ENCODE measurements at regions of chr12 and their contacts with region 1.

Region 1: GRCh38 chr12:49740930-49741881 is at the start of gene TMBIM6:
- DNase-seq: peak; percentile 100
- H3K4me3 ChIP-seq: peak within 1 kb of the TSS; percentile 100
- H3K27ac ChIP-seq: peak within 1 kb of the TSS; percentile 97
- H3K27me3 ChIP-seq: no peaks in the 10 kb centered on the region
- CTCF ChIP-seq: peak; percentile 96
- polyA plus RNA-seq, gene TMBIM6: 711 and 906 TPM in 2 replicates

Region 2: GRCh38 chr12:49644620-49644994 is 96.6 kb before region 1 on chr12:
- CTCF ChIA-PET with region 1: interaction called, 17 read pairs
- POLR2A ChIA-PET with region 1: interaction called, 7 read pairs
- DNase-seq: peak; percentile 54
- H3K4me3 ChIP-seq: no peak overlapping the region
- H3K27ac ChIP-seq: no peak overlapping the region
- H3K27me3 ChIP-seq: no peaks in the 10 kb centered on the region
- CTCF ChIP-seq: peak; percentile 99

Region 3: DNA sequence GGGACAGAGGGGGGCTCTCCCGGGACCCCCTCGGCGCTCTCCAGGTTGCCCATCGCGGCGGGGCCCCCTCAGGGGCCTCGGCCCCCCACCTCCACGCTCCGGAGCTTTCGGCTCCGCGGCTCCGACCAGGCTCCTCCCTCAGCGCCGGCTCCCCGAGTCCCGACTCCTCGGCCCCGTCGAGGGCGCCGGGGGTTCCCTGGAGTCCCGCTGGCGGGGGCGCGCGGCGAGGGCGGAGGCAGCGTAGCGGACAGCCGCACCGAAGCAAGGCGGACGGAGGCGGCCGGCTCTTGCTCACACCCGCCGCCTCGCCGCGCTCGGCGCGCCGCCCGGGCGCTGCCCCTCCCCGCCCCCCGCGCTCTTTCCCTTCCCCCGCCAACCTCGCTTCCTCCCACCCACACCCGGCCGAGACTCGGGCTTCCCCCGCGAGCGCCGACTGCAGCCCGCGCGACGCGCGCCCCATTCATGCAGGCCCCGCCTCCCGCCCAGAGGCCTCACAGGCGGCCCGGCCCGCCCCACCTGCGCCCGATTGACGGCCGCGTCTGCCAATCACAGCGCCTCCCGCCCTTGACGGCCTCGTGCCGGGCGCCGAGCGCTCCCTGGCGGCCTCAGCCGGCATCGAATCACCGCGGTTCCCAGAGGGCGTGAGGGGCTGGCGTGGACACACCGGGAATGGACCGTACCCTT is 33.9 kb before region 1 on chr12 and contains the start of gene FMNL3:
- CTCF ChIA-PET with region 1: interaction called, 22 read pairs
- POLR2A ChIA-PET with region 1: interaction called, 10 read pairs
- DNase-seq: peak; percentile 87
- H3K4me3 ChIP-seq: peak within 1 kb of the TSS; percentile 87
- H3K27ac ChIP-seq: peak within 1 kb of the TSS; percentile 80
- H3K27me3 ChIP-seq: peaks cover 4% of the 10 kb centered on the region
- CTCF ChIP-seq: peak; percentile 89
- polyA plus RNA-seq, gene FMNL3: 15.8 and 16.1 TPM in 2 replicates

Region 4: GRCh38 chr12:49763006-49763591 is 21.9 kb after region 1 on chr12:
- CTCF ChIA-PET with region 1: interaction called, 7 read pairs
- POLR2A ChIA-PET with region 1: interaction called, 11 read pairs
- DNase-seq: no peak
- H3K4me3 ChIP-seq: no peak overlapping the region
- H3K27ac ChIP-seq: no peak overlapping the region
- H3K27me3 ChIP-seq: no peaks in the 10 kb centered on the region
- CTCF ChIP-seq: peak; percentile 74

Measured in AG04450 (cell line).